Heart left ventricle (tissue), 16 donors: ENCODE measurements at regions of chr1 and their contacts with region 1.

Region 1: GRCh38 chr1:167207940-167208623 is 12.6 kb upstream of the POU2F1 start:
- DNase-seq: no peak
- ATAC-seq: peak in 1 of 4 donors; percentile 36
- H3K4me3 ChIP-seq: no peak overlapping the region
- H3K27ac ChIP-seq: no peak overlapping the region
- H3K4me1 ChIP-seq: peaks cover 0 to 5% (median 0%) of the 10 kb centered on the region in 12 donors
- H3K27me3 ChIP-seq: no peaks in the 10 kb centered on the region
- CTCF ChIP-seq: peak in 8 of 12 donors; percentile 11 to 48 (median 27)
- POLR2A ChIP-seq: no peak

Region 2: GRCh38 chr1:166902271-166902670 is 305.8 kb before region 1 on chr1:
- intact Hi-C with region 1: loop called in 1 of 10 experiments (anchors 10 kb)
- DNase-seq: no peak
- ATAC-seq: peak in 3 of 4 donors; percentile 63 to 76 (median 69)
- H3K4me3 ChIP-seq: no peak overlapping the region
- H3K27ac ChIP-seq: peak overlapping the region in 1 of 12 donors; percentile 46
- H3K4me1 ChIP-seq: peaks cover 0 to 15% (median 0%) of the 10 kb centered on the region in 12 donors
- H3K27me3 ChIP-seq: peaks cover 0 to 2% (median 0%) of the 10 kb centered on the region in 9 donors
- CTCF ChIP-seq: no peak
- POLR2A ChIP-seq: no peak

Region 3: GRCh38 chr1:167121375-167122120 is 86.5 kb before region 1 on chr1:
- intact Hi-C with region 1: loop called in 1 of 10 experiments (anchors 10 kb)
- DNase-seq: peak in 4 of 5 donors; percentile 33 to 66 (median 39)
- ATAC-seq: peak; percentile 6 to 42 (median 21)
- H3K4me3 ChIP-seq: peak overlapping the region in 8 of 12 donors; percentile 11 to 49 (median 26)
- H3K27ac ChIP-seq: no peak overlapping the region
- H3K4me1 ChIP-seq: peaks cover 0 to 23% (median 5%) of the 10 kb centered on the region in 12 donors
- H3K27me3 ChIP-seq: peaks cover 0 to 7% (median 0%) of the 10 kb centered on the region in 9 donors
- CTCF ChIP-seq: no peak
- POLR2A ChIP-seq: no peak

Region 4: DNA sequence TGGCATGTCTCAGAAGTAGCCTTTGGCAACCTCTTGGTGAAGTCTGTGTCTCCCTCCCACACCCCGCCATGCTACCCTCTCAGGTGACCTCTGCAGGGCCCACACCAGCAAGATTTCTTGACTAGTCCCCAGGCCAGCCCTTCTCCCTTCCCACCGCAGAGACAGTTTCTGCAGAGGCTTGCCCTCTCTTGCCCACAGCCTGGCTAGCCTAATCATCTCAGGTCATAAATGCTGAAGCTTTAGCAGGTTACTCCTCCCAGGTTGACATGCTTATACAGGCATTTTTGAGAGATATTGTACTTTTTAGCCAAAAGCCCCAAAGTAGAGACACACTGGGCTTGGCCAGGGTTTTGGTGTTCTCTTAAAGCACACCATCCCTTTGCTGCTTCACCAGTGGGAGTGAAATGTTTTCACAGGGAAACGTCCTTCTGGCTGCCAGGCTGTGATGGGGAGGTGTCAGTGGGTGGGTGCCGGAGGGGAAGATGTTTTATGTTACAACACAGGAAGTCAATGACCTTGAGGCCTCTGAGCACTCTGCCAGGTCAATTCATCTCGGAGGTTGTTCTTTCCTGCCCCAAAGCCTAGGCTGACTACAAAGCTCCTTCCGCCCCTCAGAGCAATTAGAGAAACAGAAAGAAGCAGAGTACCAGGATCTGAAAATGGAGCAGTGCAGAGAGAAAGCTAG is 55.7 kb before region 1 on chr1:
- intact Hi-C with region 1: no loop called
- DNase-seq: no peak
- ATAC-seq: no peak
- H3K4me3 ChIP-seq: no peak overlapping the region
- H3K27ac ChIP-seq: no peak overlapping the region
- H3K4me1 ChIP-seq: no peaks in the 10 kb centered on the region
- H3K27me3 ChIP-seq: no peaks in the 10 kb centered on the region
- CTCF ChIP-seq: no peak
- POLR2A ChIP-seq: no peak

Region 5: DNA sequence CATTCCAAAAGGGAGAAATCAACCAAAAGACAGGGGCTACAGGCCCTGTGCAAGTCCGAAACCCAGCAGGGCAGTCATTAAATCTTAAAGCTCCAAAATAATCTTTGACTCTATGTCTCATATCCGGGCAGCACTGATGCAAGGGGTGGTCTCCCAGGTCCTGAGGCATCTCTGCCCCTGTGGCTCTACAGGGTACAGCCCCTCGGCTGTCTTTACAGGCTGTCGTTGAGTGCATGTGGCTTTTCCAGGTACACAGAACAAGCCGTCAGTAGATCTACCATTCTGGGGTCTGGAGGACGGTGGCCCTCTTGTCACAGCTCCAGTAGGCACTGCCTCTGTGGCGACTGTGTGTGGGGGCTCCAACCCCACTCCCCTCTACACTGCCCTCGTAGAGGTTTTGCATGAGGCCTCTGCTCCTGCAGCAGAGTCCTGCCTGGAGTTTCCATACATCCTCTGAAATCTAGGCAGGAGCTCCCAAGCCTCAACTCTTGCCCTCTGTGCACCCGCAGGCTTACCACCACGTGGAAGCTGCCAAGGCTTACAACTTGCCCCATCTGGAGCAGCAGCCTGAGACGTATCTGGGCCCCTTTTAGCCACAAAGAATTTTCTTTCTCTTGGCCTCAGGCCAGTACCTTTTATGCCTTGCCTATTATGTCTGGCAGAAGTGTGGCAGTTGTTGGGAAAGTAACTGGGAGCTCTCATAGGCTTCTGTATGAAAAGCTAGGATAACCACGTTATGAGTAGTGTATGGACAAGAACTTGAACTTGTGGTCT is 65.1 kb after region 1 on chr1:
- intact Hi-C with region 1: no loop called
- DNase-seq: no peak
- ATAC-seq: peak; percentile 37 to 69 (median 64)
- H3K4me3 ChIP-seq: no peak overlapping the region
- H3K27ac ChIP-seq: no peak overlapping the region
- H3K4me1 ChIP-seq: peaks cover 0 to 40% (median 20%) of the 10 kb centered on the region in 12 donors
- H3K27me3 ChIP-seq: no peaks in the 10 kb centered on the region
- CTCF ChIP-seq: no peak
- POLR2A ChIP-seq: no peak

Region 6: DNA sequence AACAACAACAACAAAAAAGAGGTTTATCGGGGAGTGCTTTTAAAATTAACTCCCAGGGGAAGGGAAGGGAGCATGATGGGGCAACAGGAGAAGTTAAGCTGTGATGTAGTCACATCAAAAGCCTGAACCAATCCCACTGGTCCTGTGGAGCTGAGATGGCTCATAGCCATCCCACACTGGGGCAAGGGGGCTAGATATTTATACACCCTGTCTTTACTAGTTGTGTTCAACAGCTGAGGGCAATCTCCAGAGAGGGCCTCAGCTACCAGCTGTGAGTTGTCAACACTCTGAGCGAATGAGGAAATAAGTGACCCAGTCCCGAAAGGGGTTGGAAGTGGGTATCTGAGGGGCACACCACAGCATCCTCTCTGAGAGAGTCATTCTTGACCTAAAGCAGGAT is 376.5 kb after region 1 on chr1:
- intact Hi-C with region 1: no loop called
- DNase-seq: no peak
- ATAC-seq: no peak
- H3K4me3 ChIP-seq: no peak overlapping the region
- H3K27ac ChIP-seq: no peak overlapping the region
- H3K4me1 ChIP-seq: peaks cover 0 to 16% (median 0%) of the 10 kb centered on the region in 12 donors
- H3K27me3 ChIP-seq: no peaks in the 10 kb centered on the region
- CTCF ChIP-seq: no peak
- POLR2A ChIP-seq: no peak